ENCODE measurements at regions of chr9 and their contacts with region 1.

Region 1: GRCh38 chr9:121321016-121321503 is 49.0 kb downstream of the STOM start:
- DNase-seq: peak in 1 of 2 experiments; percentile 36
- ATAC-seq: no peak
- H3K4me3 ChIP-seq: no peak overlapping the region
- H3K27ac ChIP-seq: peak overlapping the region; percentile 81 to 92
- H3K4me1 ChIP-seq: peaks cover 67% of the 10 kb centered on the region
- CTCF ChIP-seq: no peak
- EP300 ChIP-seq: no peak
- POLR2A ChIP-seq: no peak
- RAD21 ChIP-seq: no peak

Region 2: GRCh38 chr9:121192518-121192917 is 128.5 kb before region 1 on chr9:
- CTCF ChIA-PET with region 1: no interaction called
- POLR2A ChIA-PET with region 1: no interaction called
- DNase-seq: no peak
- ATAC-seq: no peak
- H3K4me3 ChIP-seq: no peak overlapping the region
- H3K27ac ChIP-seq: no peak overlapping the region
- H3K4me1 ChIP-seq: peaks cover 64% of the 10 kb centered on the region
- CTCF ChIP-seq: no peak
- EP300 ChIP-seq: no peak
- POLR2A ChIP-seq: no peak
- RAD21 ChIP-seq: no peak

Region 3: DNA sequence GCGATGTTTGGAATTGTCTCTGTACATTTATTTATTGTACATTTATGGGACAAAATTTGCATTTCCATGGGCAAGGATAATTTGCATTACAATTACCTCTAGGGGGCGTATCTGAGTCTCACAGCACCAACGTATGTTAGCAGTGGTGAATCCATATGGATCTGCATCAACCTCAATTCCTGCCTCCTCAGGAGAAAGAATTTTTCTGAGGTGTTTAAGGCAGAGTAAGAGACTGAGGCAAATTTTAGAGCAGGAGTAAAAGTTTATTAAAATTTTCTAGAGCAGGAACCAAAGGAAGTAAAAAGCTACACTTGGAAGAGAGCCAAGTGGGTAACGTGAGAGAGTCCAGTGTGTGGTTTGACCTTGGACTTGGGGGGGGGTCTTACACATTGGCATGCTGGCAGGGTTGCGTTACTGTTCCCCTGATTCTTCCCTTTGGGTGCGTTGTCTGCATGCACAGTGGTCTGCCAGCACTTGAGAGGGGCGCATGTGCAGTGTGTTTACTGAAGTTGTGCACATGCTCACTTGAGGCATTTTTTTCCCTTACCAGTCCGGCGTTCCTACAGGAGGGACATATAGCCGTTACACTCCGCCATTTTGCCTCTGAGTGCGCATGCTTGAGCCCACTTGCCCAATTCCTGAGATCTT is 98.4 kb before region 1 on chr9:
- CTCF ChIA-PET with region 1: interaction called, 12 read pairs
- POLR2A ChIA-PET with region 1: no interaction called
- DNase-seq: peak in 1 of 2 experiments; percentile 55
- ATAC-seq: peak; percentile 59 to 79; a peak in 4 of 6 replicates
- H3K4me3 ChIP-seq: no peak overlapping the region
- H3K27ac ChIP-seq: no peak overlapping the region
- H3K4me1 ChIP-seq: 0 out of 3 replicates have a peak, but pooled peaks cover 7% of the 10 kb centered on the region
- CTCF ChIP-seq: peak; percentile 78
- EP300 ChIP-seq: no peak
- POLR2A ChIP-seq: no peak
- RAD21 ChIP-seq: peak; percentile 51 to 66

Region 4: GRCh38 chr9:121278535-121279261 is 42.4 kb before region 1 on chr9:
- CTCF ChIA-PET with region 1: interaction called, 72 read pairs
- POLR2A ChIA-PET with region 1: no interaction called
- DNase-seq: peak in 1 of 2 experiments; percentile 75
- ATAC-seq: peak; percentile 75 to 87
- H3K4me3 ChIP-seq: no peak overlapping the region
- H3K27ac ChIP-seq: peak overlapping the region; percentile 58 to 83
- H3K4me1 ChIP-seq: peaks cover 57% of the 10 kb centered on the region
- CTCF ChIP-seq: peak; percentile 88
- EP300 ChIP-seq: no peak
- POLR2A ChIP-seq: no peak
- RAD21 ChIP-seq: peak; percentile 80 to 85

Region 5: GRCh38 chr9:121305269-121305994 is 15.6 kb before region 1 on chr9:
- CTCF ChIA-PET with region 1: interaction called, 127 read pairs
- POLR2A ChIA-PET with region 1: no interaction called
- DNase-seq: no peak
- ATAC-seq: no peak
- H3K4me3 ChIP-seq: no peak overlapping the region
- H3K27ac ChIP-seq: peak overlapping the region in 1 of 2 experiments; percentile 30; a peak in 2 of 6 replicates
- H3K4me1 ChIP-seq: peaks cover 20% of the 10 kb centered on the region
- CTCF ChIP-seq: no peak
- EP300 ChIP-seq: no peak
- POLR2A ChIP-seq: no peak
- RAD21 ChIP-seq: no peak

Region 6: GRCh38 chr9:121357011-121357410 is 36.0 kb after region 1 on chr9:
- CTCF ChIA-PET with region 1: interaction called, 21 read pairs
- POLR2A ChIA-PET with region 1: no interaction called
- DNase-seq: no peak
- ATAC-seq: no peak
- H3K4me3 ChIP-seq: no peak overlapping the region
- H3K27ac ChIP-seq: peak overlapping the region in 1 of 2 experiments; percentile 47; a peak in 2 of 6 replicates
- H3K4me1 ChIP-seq: peaks cover 54% of the 10 kb centered on the region
- CTCF ChIP-seq: no peak
- EP300 ChIP-seq: no peak
- POLR2A ChIP-seq: no peak
- RAD21 ChIP-seq: no peak

Region 7: GRCh38 chr9:121405899-121406298 is 84.8 kb after region 1 on chr9:
- CTCF ChIA-PET with region 1: interaction called, 410 read pairs
- POLR2A ChIA-PET with region 1: no interaction called
- DNase-seq: no peak
- ATAC-seq: no peak
- H3K4me3 ChIP-seq: no peak overlapping the region
- H3K27ac ChIP-seq: no peak overlapping the region
- H3K4me1 ChIP-seq: no peaks in the 10 kb centered on the region
- CTCF ChIP-seq: no peak
- EP300 ChIP-seq: no peak
- POLR2A ChIP-seq: no peak
- RAD21 ChIP-seq: no peak

Region 8: GRCh38 chr9:121640076-121640475 is 319.0 kb after region 1 on chr9:
- CTCF ChIA-PET with region 1: no interaction called
- POLR2A ChIA-PET with region 1: no interaction called
- DNase-seq: peak; percentile 41 to 59
- ATAC-seq: peak; percentile 73 to 89
- H3K4me3 ChIP-seq: no peak overlapping the region
- H3K27ac ChIP-seq: no peak overlapping the region
- H3K4me1 ChIP-seq: peaks cover 15% of the 10 kb centered on the region
- CTCF ChIP-seq: peak; percentile 51
- EP300 ChIP-seq: no peak
- POLR2A ChIP-seq: no peak
- RAD21 ChIP-seq: peak; percentile 52 to 62